Right ventricle myocardium superior (tissue), 1 donor: ENCODE measurements at regions of chr1 and their contacts with region 1.

Region 1: DNA sequence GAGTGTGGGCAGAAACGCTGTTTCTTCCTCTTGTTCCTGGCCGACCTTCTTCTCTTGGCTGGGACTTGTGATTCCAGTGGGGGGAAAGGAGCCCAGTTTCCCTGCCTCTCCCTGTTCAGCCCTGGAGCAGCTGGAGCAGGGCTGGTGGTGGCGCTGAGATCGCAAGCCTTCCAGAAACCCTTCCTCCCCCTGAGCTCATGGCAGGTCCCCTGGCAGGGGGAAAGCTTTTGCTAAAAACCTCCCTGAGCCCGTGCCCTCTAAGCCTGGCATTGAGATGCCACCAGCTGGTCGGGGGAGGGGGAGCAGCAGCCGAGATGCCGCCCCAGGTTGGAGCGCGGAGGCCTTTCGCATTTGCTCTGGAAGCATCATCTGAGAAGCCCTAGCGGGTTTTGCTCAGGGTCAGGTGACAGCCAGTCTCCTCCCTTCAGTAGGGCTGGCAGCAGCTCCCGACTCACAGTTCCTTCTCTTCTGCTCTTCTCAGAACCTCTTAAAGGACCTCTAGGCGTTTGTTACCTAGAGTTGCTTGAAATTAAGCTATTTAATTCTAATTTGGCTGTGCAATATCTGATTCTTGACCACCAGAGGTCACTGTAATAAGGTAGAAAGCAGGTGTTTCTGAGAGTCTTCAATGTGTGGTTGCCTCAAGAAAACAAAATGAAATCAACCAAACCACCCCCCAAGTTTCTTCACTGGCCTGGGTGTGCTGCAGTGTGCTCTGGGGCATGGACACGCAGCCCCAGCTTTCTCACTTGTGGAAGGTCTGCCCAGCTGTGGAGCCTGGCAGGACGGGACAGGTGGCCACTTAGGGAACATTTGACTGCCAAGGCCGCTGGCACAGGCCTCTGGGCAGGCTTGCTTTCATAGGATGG is 257.3 kb downstream of the CAMTA1 start:
- DNase-seq: no peak
- ATAC-seq: peak; percentile 36

Region 2: DNA sequence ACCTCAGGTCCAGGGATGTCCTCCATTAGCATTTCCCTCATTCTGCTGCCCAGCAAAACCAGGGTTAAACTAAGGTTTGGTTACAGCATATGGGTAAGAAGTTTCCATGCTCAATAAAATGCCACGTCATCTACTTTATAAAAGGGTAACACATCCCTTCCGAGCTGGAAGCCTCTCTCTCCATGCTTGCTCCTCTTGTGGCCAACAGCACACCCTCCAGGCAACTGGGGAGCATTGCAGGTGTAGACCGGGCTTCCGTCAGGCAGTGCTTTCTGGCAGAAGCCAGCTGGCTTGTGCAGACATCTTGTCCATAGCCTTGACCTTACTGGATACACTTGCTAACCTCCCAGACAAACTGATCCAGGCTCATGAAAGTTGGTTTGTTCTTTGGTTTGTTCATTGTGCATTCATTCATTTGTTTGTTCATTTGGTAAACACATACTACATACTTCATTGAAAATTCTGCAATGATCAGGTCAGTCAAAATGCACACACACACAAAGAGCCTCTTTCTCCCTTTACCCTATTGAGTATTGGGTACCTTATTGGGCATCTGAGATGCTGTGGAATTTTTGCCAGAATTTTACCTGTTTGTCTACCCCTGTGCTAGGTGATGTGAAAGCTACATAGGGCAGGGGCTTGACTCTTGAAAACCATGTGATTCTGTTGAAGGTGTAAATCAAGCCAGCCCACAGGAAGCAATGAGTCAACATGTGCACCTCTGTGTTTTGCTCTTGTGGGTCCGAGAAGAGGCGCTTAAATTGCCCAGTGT is 165.5 kb after region 1 on chr1:
- intact Hi-C with region 1: loop called (anchors 5 kb)
- DNase-seq: no peak
- ATAC-seq: peak; percentile 79